Sciatic nerve (tissue), 2 donors: ENCODE measurements at regions of chr20 and their contacts with region 1.

Region 1: DNA sequence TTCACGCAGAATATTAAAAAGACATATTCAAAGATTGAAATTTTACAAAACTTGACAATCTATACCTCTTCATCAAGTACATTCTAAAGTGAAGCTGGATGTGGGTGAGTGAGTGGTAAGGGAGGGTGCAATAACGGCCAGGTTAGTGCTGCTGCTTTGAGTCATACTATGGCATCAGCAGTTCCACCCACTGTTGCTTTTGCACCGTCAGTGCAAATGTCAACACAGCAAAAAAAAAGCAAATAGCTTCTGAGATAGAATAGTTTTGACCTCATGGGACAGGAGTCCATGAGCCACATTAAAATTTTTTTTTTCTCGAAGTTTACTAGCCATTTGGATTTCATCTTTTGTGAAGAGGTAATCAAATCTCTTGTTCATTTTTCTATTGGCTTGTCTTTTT is 31.8 kb downstream of the PSMF1 start:
- DNase-seq: no peak
- ATAC-seq: no peak

Region 2: DNA sequence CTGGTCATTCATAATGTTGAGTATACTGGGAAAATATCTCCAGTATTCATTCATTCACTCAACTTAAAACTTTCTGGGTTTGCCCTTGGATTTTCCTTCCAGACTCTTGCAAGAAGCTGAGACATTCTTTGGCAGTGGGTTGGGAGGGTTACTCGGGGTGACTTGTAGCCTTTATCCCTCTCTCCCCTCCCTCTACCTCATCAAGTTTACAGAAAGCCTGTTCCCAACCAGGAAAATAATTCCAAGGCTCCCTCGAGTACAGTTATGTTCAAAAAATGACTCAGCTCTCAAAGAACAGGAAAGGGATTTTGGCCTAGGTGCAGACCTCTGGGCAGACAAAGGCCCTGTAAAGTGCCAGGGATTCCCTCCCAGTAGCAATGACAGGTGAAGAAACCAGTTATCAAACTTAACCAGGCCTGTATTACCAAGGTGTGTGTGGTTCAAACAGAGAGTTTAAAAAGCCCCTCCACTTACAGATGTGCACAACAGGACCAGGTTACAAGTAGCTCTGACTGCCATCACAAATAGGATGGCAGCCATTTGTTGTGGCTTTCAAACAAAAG is 220.4 kb after region 1 on chr20:
- intact Hi-C with region 1: no loop called
- DNase-seq: no peak
- ATAC-seq: peak; percentile 85

Region 3: GRCh38 chr20:1764136-1765033 is 614.2 kb after region 1 on chr20:
- intact Hi-C with region 1: loop called (anchors 10 kb)
- DNase-seq: peak; percentile 89
- ATAC-seq: peak; percentile 96